Posterior vena cava (tissue), 2 donors: ENCODE measurements at regions of chr6 and their contacts with region 1.

Region 1: DNA sequence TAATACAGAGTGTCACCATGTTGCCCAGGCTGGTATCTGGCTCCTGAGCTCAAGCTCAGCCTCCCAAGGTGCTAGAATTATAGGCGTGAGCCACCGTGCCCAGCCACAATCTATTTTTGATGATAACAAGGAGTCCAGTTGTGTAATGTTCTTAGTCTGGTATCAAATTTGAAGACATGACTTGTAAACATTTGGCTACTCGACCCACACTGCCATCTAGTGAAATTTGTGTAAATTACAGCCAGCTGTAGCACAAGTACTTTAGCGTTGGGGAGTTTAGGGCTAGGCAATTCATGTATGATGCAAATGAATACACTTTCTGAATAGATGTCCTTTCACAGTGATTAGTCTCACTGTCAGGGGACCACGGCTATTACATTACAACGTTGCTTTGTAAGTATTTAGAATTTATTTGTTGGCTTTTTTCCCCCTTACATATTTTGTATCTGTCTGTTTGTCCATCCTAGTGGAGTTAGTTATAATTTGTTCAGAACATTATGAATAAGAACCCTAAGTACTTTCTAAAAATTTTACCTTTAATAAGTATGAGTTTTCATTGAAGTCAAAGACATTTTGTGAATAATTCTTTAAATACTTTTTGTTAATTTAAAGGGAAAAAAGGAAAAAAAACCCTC is 139.7 kb downstream of the PRDM13 start:
- DNase-seq: no peak

Region 2: GRCh38 chr6:99467509-99468106 is 278.8 kb before region 1 on chr6:
- intact Hi-C with region 1: loop called in 1 of 2 experiments (anchors 10 kb)
- DNase-seq: no peak

Region 3: DNA sequence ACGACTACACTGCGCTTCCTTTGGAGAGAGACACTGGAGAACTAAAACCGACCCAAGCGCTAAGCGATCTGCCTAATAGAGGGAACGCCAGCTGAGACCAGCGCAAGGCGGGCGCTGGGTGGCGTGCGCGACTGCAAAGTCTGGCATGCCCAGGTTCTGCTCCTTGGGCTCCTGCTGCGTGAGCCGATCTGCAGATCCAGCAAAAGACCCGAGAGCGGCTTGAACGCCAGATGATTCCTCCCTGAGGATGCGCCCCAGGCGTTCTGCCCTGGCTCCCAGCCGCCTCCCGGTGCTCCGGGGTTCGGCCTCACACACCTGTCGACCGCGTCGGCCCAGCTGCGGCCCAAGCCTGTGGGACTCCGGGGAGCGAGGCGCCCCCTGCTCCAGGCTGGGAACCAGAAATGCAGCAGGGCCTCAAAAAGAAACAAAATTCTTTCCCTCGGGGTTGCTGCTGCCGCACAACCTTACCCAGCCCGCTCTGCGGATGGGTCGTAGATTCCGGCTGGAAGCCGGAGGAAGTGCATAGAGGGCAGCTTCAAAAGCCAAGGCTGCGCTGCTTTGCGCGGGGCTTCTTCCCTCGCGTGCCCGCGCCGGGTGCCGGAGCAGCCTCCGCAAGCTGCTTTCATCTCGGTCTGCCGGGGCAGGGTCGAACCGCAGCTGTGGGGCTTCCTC is 157.6 kb before region 1 on chr6:
- intact Hi-C with region 1: loop called in 1 of 2 experiments (anchors 10 kb)
- DNase-seq: peak; percentile 90

Region 4: GRCh38 chr6:99822741-99823512 is 76.5 kb after region 1 on chr6:
- intact Hi-C with region 1: no loop called
- DNase-seq: no peak

Region 5: DNA sequence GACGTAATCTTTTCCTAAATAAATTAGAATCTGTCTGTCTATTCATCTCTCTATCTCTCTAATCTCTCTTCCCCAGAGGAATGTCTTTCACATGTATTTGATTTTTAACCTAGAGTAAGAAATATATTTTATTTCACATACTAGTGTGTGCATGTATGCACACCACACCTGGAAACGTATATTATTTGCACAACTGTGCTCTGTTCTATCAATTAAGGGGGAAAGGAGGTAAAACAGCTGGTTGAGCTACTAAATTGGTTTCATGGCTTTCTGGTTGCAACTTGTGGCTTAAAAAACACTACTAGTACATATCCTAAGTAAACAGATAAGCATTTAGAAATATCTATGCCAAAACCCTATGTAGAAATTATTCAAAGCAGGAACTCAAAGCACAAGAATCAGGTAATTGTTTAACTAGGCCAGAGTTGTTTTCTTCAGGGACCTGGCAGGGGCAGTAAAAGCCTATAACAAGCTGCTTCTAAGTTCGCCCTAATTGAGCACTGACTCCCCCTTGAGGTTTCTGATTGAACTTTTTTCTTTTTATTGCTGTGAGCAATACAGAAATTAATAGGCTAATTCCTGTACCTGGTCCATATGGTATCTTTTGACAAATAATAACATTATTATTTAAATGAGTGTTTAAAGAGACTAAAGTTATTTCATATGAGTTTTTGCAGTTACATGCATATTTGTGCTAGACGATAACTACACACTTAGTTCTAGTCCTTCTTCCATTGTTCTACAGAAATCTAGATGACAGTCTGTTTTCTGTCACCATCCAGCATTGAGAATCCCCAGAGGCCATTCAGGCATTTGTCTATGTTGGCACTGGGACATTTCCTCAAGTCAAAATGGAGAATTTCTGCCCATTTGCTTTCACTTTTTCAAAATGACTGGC is 159.1 kb after region 1 on chr6:
- intact Hi-C with region 1: no loop called
- DNase-seq: no peak